Natural killer cell (primary cell): ENCODE measurements at regions of chr2 and their contacts with region 1.

Region 1: DNA sequence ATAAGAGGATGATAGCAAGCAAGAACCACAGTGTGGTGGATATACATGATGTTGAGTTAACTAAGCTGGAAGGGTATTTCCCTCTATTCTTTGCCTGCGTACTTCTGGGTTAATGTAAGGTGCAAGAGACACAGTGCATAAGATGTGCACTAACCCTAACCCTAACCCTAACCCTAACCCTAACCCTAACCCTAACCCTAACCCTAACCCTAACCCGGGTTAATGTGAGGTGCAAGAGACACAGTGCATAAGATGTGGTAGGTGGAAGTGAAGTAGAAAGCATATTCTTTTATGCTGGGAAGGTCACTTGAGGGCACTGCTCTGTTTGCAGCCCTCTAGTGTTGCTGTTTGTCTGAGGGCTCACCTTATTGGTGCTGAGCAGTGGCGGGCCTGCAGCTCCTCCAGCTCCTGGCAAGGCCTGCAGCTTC is 181.5 kb upstream of the ITGA4 start:
- DNase-seq: peak in 1 of 2 donors; percentile 67
- ATAC-seq: peak; percentile 82 to 90 (median 83)
- H3K4me3 ChIP-seq: no peak overlapping the region
- H3K4me3 Mint-ChIP-seq: no peak overlapping the region
- H3K27ac ChIP-seq: peak overlapping the region; percentile 24
- H3K27ac Mint-ChIP-seq: peak overlapping the region; percentile 78 to 83
- H3K4me1 ChIP-seq: peaks cover 6% of the 10 kb centered on the region
- H3K4me1 Mint-ChIP-seq: peaks cover 26 to 37% of the 10 kb centered on the region in 2 donors
- H3K27me3 ChIP-seq: no peaks in the 10 kb centered on the region
- H3K27me3 Mint-ChIP-seq: no peaks in the 10 kb centered on the region
- CTCF ChIP-seq: no peak

Region 2: DNA sequence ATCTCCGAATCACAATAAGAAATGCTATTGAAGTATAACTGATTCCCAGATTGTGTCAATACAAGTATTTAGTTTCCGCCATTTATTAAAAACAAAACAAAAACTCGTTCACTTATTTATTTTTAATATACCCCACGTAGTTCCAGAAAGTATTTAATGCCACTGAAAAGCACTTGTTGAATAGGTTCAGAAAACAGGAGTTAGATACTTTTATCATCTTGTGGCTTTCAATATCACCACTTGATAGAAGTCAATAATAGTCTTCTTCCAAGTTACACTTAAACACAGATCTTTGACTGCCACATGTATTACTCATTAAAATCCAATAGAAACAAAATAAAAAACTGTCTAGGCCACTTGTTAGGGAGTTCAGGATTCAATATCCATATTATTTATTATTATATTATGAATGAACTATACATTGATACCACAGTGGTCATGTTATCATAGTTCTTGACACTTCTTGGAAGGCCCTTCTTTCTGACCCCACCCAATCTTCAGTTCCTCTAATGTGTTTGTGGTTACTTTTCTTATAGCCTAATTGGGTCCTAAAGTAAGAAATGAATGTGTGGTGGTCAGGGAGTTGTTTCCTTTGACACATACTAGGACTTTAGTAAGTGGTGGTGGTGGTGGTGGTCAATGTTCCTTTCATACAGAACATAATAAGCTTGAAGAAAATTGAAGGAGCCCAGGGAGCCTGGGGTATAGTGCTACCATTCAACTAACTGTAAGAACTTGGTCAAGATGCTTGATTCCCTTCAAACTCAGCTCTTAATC is 39.8 kb before region 1 on chr2:
- intact Hi-C with region 1: loop called (anchors 5 kb)
- DNase-seq: no peak
- ATAC-seq: peak; percentile 30 to 55 (median 34)
- H3K4me3 ChIP-seq: no peak overlapping the region
- H3K4me3 Mint-ChIP-seq: peak overlapping the region; percentile 51
- H3K27ac ChIP-seq: no peak overlapping the region
- H3K27ac Mint-ChIP-seq: peak overlapping the region; percentile 69 to 76
- H3K4me1 ChIP-seq: no peaks in the 10 kb centered on the region
- H3K4me1 Mint-ChIP-seq: peaks cover 48 to 53% of the 10 kb centered on the region in 2 donors
- H3K27me3 ChIP-seq: no peaks in the 10 kb centered on the region
- H3K27me3 Mint-ChIP-seq: no peaks in the 10 kb centered on the region
- CTCF ChIP-seq: no peak

Region 3: DNA sequence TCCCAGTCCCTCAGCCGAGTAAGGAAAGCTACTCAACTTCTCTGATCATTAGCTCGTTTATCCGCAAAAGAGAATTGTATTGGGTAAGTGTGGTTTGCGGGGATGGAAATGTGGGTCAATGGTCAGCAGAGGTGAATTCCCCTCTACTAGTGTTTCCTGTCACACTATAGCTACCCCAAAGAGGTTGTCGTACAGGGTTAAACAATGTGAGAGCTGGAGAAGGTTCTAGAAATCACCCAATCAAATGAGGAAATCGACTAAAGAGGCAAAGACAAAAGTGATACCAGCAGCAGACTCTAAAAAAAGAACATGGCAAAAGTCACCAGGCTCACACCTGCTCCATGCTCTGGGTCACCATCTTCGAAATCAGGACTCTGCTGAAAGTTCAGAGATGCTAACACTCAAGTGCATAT is 36.9 kb after region 1 on chr2:
- intact Hi-C with region 1: loop called (anchors 5 kb)
- DNase-seq: peak; percentile 41 to 69
- ATAC-seq: peak; percentile 68 to 80 (median 77)
- H3K4me3 ChIP-seq: no peak overlapping the region
- H3K4me3 Mint-ChIP-seq: peak overlapping the region; percentile 82
- H3K27ac ChIP-seq: peak overlapping the region; percentile 84
- H3K27ac Mint-ChIP-seq: peak overlapping the region; percentile 88 to 89
- H3K4me1 ChIP-seq: peaks cover 21% of the 10 kb centered on the region
- H3K4me1 Mint-ChIP-seq: peaks cover 45 to 53% of the 10 kb centered on the region in 2 donors
- H3K27me3 ChIP-seq: no peaks in the 10 kb centered on the region
- H3K27me3 Mint-ChIP-seq: no peaks in the 10 kb centered on the region
- CTCF ChIP-seq: no peak

Region 4: DNA sequence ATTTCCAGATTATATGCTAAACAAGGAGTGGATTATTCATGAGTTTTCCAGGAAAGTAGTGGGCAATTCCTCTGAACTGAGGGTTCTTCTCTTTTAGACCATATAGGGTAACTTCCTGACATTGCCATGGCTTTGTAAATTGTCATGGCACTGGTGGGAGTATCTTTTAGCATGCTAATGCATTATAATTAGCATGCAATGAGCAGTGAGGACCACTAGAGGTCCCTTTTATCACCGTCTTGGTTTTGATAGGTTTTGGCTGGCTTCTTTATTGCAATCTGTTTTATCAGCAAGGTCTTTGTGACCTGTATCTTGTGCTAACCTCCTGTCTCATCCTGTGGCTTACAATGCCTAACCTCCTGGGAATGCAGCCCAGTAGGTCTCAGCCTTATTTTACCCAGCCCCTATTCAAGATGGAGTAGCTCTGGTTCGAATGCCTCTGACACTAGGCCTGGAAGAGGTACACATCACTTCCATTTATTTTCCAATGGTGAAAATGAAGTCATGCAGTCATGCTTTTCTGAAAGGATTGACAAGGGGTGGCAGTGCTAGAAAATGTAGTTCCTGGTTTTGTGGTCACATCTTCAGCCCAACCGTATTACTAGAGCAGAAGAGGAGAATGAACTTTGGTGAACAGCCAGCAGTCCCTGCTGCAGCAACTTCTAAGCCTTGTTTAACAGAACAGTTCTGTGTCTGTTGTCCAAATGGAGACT is 154.9 kb after region 1 on chr2:
- intact Hi-C with region 1: no loop called
- DNase-seq: peak in 1 of 2 donors; percentile 67
- ATAC-seq: peak; percentile 79 to 92 (median 80)
- H3K4me3 ChIP-seq: no peak overlapping the region
- H3K4me3 Mint-ChIP-seq: peak overlapping the region; percentile 26
- H3K27ac ChIP-seq: peak overlapping the region; percentile 16
- H3K27ac Mint-ChIP-seq: peak overlapping the region; percentile 61 to 67
- H3K4me1 ChIP-seq: peaks cover 8% of the 10 kb centered on the region
- H3K4me1 Mint-ChIP-seq: peaks cover 18 to 23% of the 10 kb centered on the region in 2 donors
- H3K27me3 ChIP-seq: no peaks in the 10 kb centered on the region
- H3K27me3 Mint-ChIP-seq: no peaks in the 10 kb centered on the region
- CTCF ChIP-seq: peak; percentile 70